Endothelial cell of umbilical vein (primary cell): ENCODE measurements at regions of chr12 and their contacts with region 1.

Region 1: DNA sequence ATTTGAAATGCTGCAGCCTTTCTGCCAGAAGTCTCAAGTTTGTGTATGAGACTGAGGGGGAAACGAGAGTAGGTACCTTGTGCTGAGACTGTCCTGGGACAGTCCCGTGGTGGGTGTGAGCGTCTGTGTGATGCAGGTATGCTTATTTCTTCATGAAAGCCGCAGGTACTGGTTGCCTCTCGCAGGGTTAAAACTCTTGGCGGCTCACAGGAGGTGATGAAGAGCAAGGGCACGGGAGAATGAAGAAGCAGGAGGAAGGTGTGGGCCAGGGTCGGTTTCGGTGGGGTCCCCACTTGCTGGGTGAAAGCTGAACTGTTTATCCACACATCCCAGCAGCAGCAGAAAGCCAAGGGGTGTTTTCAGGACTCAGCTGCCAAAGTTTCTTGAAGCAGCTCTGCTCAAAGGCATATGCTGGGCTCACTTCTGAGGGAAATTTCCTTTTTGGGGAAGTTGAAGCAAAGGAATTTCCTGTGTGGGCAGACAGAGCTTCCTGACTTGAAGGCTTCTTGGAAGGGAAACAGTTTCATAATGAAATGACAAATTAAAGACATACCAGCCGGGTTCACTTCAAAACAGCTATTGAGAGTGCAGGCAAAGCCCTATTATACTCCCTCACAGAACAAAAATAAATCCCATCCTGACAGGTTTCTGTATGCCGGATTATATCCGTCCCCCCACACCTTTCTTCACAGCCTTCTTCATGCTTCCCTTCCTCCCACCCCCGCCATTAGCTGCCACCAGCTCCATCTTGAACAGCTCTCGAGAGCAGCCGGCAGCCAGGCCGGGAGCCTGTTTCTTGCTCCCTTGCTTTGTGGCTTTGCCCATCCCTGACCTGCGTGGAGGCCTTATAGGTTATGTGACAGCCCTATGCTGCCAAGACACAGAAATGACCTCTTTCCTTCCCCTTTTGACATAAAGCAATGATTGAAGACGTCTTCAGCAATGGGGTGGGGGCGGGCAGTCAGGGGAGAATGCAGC is 116.6 kb downstream of the ETV6 start:
- DNase-seq: peak; percentile 78
- H3K4me3 ChIP-seq: no peak overlapping the region
- H3K27ac ChIP-seq: peak overlapping the region; percentile 85
- H3K4me1 ChIP-seq: peaks cover 41% of the 10 kb centered on the region
- H3K27me3 ChIP-seq: no peaks in the 10 kb centered on the region
- CTCF ChIP-seq: no peak
- POLR2A ChIP-seq: peak; percentile 53

Region 2: GRCh38 chr12:10901427-10901826 is 864.7 kb before region 1 on chr12:
- CTCF ChIA-PET with region 1: no interaction called
- POLR2A ChIA-PET with region 1: no interaction called
- dilution Hi-C with region 1: no loop called
- intact Hi-C with region 1: no loop called
- DNase-seq: no peak
- H3K4me3 ChIP-seq: no peak overlapping the region
- H3K27ac ChIP-seq: no peak overlapping the region
- H3K4me1 ChIP-seq: no peaks in the 10 kb centered on the region
- H3K27me3 ChIP-seq: no peaks in the 10 kb centered on the region
- CTCF ChIP-seq: no peak
- POLR2A ChIP-seq: no peak

Region 3: GRCh38 chr12:11581179-11581755 is 184.8 kb before region 1 on chr12:
- CTCF ChIA-PET with region 1: interaction called, 4 read pairs
- POLR2A ChIA-PET with region 1: no interaction called
- dilution Hi-C with region 1: no loop called
- intact Hi-C with region 1: loop called (anchors 5 kb)
- DNase-seq: peak; percentile 65
- H3K4me3 ChIP-seq: no peak overlapping the region
- H3K27ac ChIP-seq: no peak overlapping the region
- H3K4me1 ChIP-seq: peaks cover 8% of the 10 kb centered on the region
- H3K27me3 ChIP-seq: no peaks in the 10 kb centered on the region
- CTCF ChIP-seq: peak in 1 of 2 donors; percentile 16
- POLR2A ChIP-seq: no peak

Region 4: DNA sequence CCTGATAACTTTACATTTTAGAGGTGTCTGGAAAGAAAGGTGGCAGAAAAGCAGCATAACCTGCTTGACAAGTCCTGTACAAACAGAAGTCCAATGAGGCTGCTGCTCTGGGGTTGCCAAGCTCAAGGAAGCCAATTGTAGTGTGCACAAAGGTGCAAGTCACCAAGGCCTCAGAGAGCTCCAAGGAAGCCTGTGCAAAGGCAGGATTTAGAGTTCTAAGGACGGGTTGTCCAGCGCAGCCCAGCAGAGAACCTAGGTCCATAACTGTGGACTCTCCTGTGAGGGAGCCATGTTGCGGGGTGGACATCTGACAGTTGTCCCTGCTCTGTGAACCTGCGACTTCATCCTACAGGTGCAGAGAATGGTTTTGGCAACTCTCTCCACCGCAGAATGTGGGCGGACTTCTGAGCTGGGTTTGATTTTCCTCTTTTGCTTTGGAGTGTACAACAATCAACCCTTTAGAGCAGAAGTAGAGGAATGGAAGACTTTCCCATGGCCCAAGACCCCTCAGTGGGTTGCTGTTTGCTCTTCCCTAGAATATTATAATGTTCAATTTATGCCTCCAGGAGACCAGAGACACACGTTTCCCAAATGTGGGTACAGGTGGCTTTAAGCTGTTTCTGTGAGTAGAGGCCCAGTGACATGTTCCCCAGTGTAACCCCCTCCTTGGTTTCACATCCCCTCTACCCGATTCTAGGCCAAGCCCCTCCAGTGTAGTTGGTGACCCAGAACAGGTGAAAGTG is 35.6 kb before region 1 on chr12:
- CTCF ChIA-PET with region 1: interaction called, 3 read pairs
- POLR2A ChIA-PET with region 1: no interaction called
- dilution Hi-C with region 1: no loop called
- intact Hi-C with region 1: loop called (anchors 5 kb)
- DNase-seq: no peak
- H3K4me3 ChIP-seq: no peak overlapping the region
- H3K27ac ChIP-seq: peak overlapping the region; percentile 91
- H3K4me1 ChIP-seq: peaks cover 43% of the 10 kb centered on the region
- H3K27me3 ChIP-seq: no peaks in the 10 kb centered on the region
- CTCF ChIP-seq: no peak
- POLR2A ChIP-seq: no peak

Region 5: DNA sequence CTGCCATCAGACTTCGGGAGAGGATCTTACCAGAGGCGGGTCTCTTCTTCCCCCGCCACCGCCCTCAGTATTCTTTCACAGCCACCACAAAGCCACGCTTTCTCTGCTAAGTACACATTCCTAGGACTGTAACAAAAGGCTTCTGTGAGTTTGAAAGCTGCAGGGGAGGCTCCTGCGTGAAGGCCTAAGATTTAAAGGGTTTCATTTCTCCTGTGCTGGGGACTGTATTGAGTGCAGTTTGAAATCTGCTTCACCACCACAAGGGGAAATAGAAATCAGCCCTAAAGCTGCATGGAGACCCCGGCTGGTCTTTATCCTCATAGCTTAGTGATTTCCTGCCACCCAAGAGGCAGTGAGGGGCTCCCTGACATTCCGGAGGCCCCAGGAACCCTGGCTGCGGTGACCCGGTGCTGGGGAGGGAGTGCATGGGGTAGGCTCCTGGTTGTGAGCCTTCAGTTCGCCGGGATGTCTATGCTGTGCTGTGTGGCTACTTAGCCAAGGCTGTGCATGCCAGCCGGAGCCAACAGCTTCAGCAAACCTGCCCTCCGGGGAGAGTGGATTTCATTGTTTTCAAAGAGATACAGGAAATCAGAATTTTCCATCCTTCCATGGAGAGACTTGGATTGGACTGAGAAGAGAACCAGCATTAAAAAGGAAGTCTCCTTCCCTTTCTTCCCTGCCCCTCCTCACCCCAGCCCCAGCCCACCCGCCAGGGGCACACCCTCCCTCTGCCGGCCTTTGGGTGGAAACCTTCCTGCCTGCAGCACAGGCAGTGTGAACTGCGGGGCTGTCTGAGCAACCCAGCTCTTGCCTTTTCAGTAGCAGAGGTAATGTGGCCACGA is 46.7 kb after region 1 on chr12:
- CTCF ChIA-PET with region 1: interaction called, 8 read pairs
- POLR2A ChIA-PET with region 1: no interaction called
- dilution Hi-C with region 1: no loop called
- intact Hi-C with region 1: loop called (anchors 1 kb)
- DNase-seq: peak; percentile 59
- H3K4me3 ChIP-seq: peak overlapping the region in 1 of 3 experiments; percentile 29
- H3K27ac ChIP-seq: peak overlapping the region; percentile 77
- H3K4me1 ChIP-seq: peaks cover 35% of the 10 kb centered on the region
- H3K27me3 ChIP-seq: no peaks in the 10 kb centered on the region
- CTCF ChIP-seq: peak in 1 of 2 donors; percentile 40
- POLR2A ChIP-seq: peak; percentile 46

Region 6: GRCh38 chr12:11885261-11886038 is 119.3 kb after region 1 on chr12:
- CTCF ChIA-PET with region 1: no interaction called
- POLR2A ChIA-PET with region 1: no interaction called
- dilution Hi-C with region 1: no loop called
- intact Hi-C with region 1: loop called (anchors 1 kb)
- DNase-seq: peak; percentile 95
- H3K4me3 ChIP-seq: peak overlapping the region in 1 of 3 experiments; percentile 9
- H3K27ac ChIP-seq: peak overlapping the region; percentile 92
- H3K4me1 ChIP-seq: peaks cover 49% of the 10 kb centered on the region
- H3K27me3 ChIP-seq: no peaks in the 10 kb centered on the region
- CTCF ChIP-seq: no peak
- POLR2A ChIP-seq: peak; percentile 51